Posterior cingulate gyrus (tissue), 11 donors: ENCODE measurements at regions of chr1 and their contacts with region 1.

Region 1: GRCh38 chr1:153510984-153511410 is 24.8 kb downstream of the S100A6 start:
- DNase-seq: peak; percentile 62 to 96 (median 76)

Region 2: DNA sequence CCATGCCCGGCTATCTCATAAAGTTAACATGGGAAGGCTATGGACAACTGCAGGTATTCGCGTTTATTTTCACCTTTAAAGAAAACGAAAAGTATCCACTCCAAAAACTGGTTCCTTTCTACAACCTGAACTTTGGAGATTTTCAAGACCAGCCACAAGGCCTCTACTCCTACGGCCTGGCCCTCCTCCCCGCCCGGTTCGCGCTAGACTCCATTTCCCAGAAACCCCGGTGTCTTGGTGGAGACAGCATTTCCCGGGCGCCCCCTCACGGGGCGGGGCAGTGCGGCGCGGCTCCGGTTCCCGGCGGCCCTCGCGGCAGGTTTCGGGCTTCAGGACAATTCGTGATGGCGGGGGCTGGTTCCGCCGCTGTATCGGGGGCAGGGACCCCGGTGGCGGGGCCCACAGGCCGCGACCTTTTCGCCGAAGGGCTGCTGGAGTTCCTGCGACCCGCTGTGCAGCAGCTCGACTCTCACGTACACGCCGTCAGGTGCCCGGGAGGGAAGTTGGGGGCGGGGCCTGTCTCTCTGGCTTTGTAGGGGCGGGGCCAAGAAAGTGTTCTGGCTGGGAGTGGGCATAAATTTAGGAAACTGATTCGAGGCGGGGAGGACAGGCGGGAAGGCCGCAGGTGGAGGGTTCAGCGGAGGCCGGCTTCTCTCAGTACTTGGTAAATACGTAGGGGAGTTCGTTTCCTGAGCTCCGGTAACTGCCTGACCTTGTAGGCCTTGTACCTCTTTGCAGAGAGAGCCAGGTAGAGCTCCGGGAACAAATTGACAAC is 147.6 kb after region 1 on chr1 and contains the start of gene SNAPIN:
- intact Hi-C with region 1: loop called (anchors 10 kb)
- DNase-seq: peak; percentile 84 to 99 (median 90)

Region 3: GRCh38 chr1:153749408-153750005 is 238.5 kb after region 1 on chr1:
- intact Hi-C with region 1: loop called (anchors 10 kb)
- DNase-seq: peak; percentile 67 to 97 (median 82)